PC-3 (cell line): ENCODE measurements at regions of chr2 and their contacts with region 1.

Region 1: GRCh38 chr2:233976690-233977294 is 59.6 kb downstream of the TRPM8 start:
- DNase-seq: peak; percentile 85
- ATAC-seq: peak; percentile 48
- H3K4me3 ChIP-seq: no peak overlapping the region
- H3K27ac ChIP-seq: no peak overlapping the region
- H3K4me1 ChIP-seq: peaks cover 64% of the 10 kb centered on the region
- H3K27me3 ChIP-seq: no peaks in the 10 kb centered on the region
- CTCF ChIP-seq: peak; percentile 75

Region 2: GRCh38 chr2:233934524-233934923 is 42.3 kb before region 1 on chr2:
- CTCF ChIA-PET with region 1: no interaction called
- POLR2A ChIA-PET with region 1: no interaction called
- intact Hi-C with region 1: no loop called
- DNase-seq: no peak
- ATAC-seq: no peak
- H3K4me3 ChIP-seq: no peak overlapping the region
- H3K27ac ChIP-seq: no peak overlapping the region
- H3K4me1 ChIP-seq: no peaks in the 10 kb centered on the region
- H3K27me3 ChIP-seq: no peaks in the 10 kb centered on the region
- CTCF ChIP-seq: no peak

Region 3: GRCh38 chr2:234003972-234004617 is 27.3 kb after region 1 on chr2:
- CTCF ChIA-PET with region 1: no interaction called
- POLR2A ChIA-PET with region 1: no interaction called
- intact Hi-C with region 1: no loop called
- DNase-seq: peak; percentile 83
- ATAC-seq: peak; percentile 99
- H3K4me3 ChIP-seq: no peak overlapping the region
- H3K27ac ChIP-seq: no peak overlapping the region
- H3K4me1 ChIP-seq: peaks cover 13% of the 10 kb centered on the region
- H3K27me3 ChIP-seq: no peaks in the 10 kb centered on the region
- CTCF ChIP-seq: no peak

Region 4: DNA sequence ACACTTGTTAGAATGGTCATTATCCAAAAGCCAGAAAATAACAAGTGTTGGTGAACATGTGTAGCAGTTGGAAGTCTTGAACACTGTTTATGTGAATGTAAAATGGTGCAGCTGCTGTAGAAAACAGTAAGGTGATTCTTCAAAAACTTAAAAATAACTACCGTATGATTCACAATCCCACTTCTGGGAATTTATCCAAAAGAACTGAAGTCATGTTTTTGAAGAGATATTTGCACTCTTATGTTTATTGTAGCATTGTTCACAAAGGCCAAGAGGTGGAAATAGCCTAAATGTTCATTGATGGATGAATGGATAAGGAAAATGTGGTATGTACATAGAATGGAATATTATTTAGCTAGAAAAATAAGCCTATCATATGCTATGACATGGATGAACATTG is 67.4 kb after region 1 on chr2:
- CTCF ChIA-PET with region 1: no interaction called
- POLR2A ChIA-PET with region 1: no interaction called
- intact Hi-C with region 1: loop called (anchors 5 kb)
- DNase-seq: peak; percentile 93
- ATAC-seq: peak; percentile 84
- H3K4me3 ChIP-seq: no peak overlapping the region
- H3K27ac ChIP-seq: peak overlapping the region; percentile 48
- H3K4me1 ChIP-seq: peaks cover 13% of the 10 kb centered on the region
- H3K27me3 ChIP-seq: no peaks in the 10 kb centered on the region
- CTCF ChIP-seq: no peak

Region 5: DNA sequence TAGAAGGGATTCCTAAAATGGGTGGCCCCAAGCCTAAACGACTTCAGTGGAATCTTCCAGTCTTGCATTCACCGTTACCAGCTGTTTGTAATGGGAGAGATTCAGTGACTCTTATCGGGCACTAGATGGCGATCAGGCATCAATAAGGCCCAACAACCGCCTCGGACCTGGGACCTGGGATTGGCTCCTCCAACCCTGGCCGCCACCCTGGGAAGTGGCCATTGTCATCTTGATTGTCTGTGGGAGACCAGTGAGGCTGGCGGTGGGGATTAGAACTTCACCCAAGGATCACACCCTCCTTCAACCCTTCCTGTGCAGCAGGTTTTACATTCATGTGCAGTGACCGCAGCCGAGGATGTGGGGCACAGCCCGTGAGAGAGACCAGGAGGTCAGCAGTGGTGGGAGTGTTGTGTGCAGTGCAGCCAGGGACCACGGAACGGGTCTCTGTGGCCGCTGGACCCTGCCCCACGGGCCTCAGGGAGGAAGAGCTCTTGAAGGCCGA is 159.0 kb after region 1 on chr2:
- CTCF ChIA-PET with region 1: no interaction called
- POLR2A ChIA-PET with region 1: no interaction called
- intact Hi-C with region 1: loop called (anchors 1 kb)
- DNase-seq: peak; percentile 82
- ATAC-seq: peak; percentile 74
- H3K4me3 ChIP-seq: no peak overlapping the region
- H3K27ac ChIP-seq: peak overlapping the region; percentile 48
- H3K4me1 ChIP-seq: peaks cover 46% of the 10 kb centered on the region
- H3K27me3 ChIP-seq: no peaks in the 10 kb centered on the region
- CTCF ChIP-seq: peak; percentile 91

Region 6: GRCh38 chr2:234251326-234252271 is 274.8 kb after region 1 on chr2:
- CTCF ChIA-PET with region 1: no interaction called
- POLR2A ChIA-PET with region 1: no interaction called
- intact Hi-C with region 1: loop called (anchors 2 kb)
- DNase-seq: peak; percentile 97
- ATAC-seq: peak; percentile 74
- H3K4me3 ChIP-seq: peak overlapping the region; percentile 7; the same call in 1 of the 2 replicates
- H3K27ac ChIP-seq: peak overlapping the region; percentile 91
- H3K4me1 ChIP-seq: peaks cover 60% of the 10 kb centered on the region
- H3K27me3 ChIP-seq: no peaks in the 10 kb centered on the region
- CTCF ChIP-seq: no peak

Region 7: DNA sequence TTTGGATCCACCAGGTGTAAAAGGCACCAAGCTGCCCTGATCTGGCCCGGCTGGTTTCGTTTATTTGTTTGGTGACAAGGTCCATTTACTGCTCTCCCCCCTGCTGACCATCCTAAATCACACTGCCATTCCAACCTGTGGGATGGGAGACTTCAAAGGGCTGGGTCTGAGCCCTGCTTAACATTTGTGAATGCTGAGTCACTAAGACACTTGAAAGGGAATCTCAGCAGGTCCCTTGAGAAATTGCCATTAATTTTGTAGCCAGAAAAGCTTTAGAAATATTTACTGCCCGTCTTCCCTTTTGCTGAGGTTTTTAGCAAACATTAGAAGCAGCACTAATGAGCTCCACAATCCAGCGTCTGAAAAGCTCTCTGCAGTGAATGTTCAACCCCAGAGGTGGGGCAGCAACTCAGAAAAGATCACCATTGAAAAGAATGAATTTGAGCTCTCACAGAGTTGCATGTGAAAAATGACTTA is 386.3 kb after region 1 on chr2:
- CTCF ChIA-PET with region 1: no interaction called
- POLR2A ChIA-PET with region 1: no interaction called
- intact Hi-C with region 1: loop called (anchors 5 kb)
- DNase-seq: peak; percentile 95
- ATAC-seq: peak; percentile 92
- H3K4me3 ChIP-seq: peak overlapping the region; percentile 40
- H3K27ac ChIP-seq: peak overlapping the region; percentile 90
- H3K4me1 ChIP-seq: peaks cover 57% of the 10 kb centered on the region
- H3K27me3 ChIP-seq: no peaks in the 10 kb centered on the region
- CTCF ChIP-seq: no peak

Region 8: DNA sequence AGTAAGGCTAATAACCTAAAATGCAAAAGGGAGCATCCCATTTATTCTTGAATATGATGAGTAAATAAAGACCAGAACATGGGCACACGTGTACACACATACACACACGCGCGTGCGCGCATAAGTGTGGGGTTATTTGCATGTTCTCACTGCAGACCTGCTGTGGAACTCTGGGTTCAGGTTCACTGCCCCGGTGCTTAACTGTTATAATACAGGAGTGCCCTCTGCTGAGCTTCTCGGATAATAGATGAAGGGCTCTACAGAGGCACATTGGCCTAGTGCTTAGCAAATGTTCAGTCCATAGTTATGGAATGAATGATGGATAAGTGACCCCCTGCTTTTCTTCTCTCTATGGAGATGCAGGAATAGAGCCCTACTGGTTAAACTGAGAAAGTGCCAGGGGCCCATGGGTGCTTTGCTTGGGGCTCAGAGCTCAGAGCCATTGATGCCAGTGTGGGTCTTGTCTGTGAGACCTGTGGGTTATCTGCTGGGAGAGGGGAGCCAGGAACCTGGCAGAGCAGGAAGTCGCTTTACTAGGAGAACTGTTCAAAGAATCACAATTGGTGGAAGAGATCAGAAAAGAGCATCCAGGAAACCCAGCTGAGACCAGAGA is 523.7 kb after region 1 on chr2:
- CTCF ChIA-PET with region 1: interaction called, 3 read pairs
- POLR2A ChIA-PET with region 1: no interaction called
- intact Hi-C with region 1: loop called (anchors 1 kb)
- DNase-seq: peak; percentile 66
- ATAC-seq: peak; percentile 23; the same call in 1 of the 2 replicates
- H3K4me3 ChIP-seq: no peak overlapping the region
- H3K27ac ChIP-seq: no peak overlapping the region
- H3K4me1 ChIP-seq: peaks cover 16% of the 10 kb centered on the region
- H3K27me3 ChIP-seq: no peaks in the 10 kb centered on the region
- CTCF ChIP-seq: peak; percentile 82

Region 9: GRCh38 chr2:235116885-235117492 is 1140.2 kb after region 1 on chr2:
- CTCF ChIA-PET with region 1: no interaction called
- POLR2A ChIA-PET with region 1: no interaction called
- intact Hi-C with region 1: loop called (anchors 5 kb)
- DNase-seq: peak; percentile 76
- ATAC-seq: no peak; the same call in 1 of the 2 replicates
- H3K4me3 ChIP-seq: no peak overlapping the region
- H3K27ac ChIP-seq: no peak overlapping the region
- H3K4me1 ChIP-seq: no peaks in the 10 kb centered on the region
- H3K27me3 ChIP-seq: no peaks in the 10 kb centered on the region
- CTCF ChIP-seq: peak; percentile 80